Activated T-helper 2 cell treated with anti-CD3 and anti-CD28 coated beads, Interferon-gamma antibody, Interleukin-2, Interleukin-4, amounts not matched to agents 10 μg/mL and 5 μg/mL and 100 μg/mL, durations not matched to agents 14 hours and 24 hours and 36 hours (primary cell): ENCODE measurements at regions of chr18 and their contacts with region 1.

Region 1: GRCh38 chr18:77054606-77055428 is 77.8 kb downstream of the MBP start:
- DNase-seq: peak; percentile 80
- H3K4me3 Mint-ChIP-seq: peak overlapping the region; percentile 83
- H3K27ac Mint-ChIP-seq: peak overlapping the region; percentile 96
- H3K4me1 Mint-ChIP-seq: peaks cover 62% of the 10 kb centered on the region
- H3K27me3 Mint-ChIP-seq: no peaks in the 10 kb centered on the region

Region 2: GRCh38 chr18:76013057-76013456 is 1041.8 kb before region 1 on chr18:
- intact Hi-C with region 1: no loop called
- DNase-seq: no peak
- H3K4me3 Mint-ChIP-seq: no peak overlapping the region
- H3K27ac Mint-ChIP-seq: no peak overlapping the region
- H3K4me1 Mint-ChIP-seq: no peaks in the 10 kb centered on the region
- H3K27me3 Mint-ChIP-seq: no peaks in the 10 kb centered on the region

Region 3: GRCh38 chr18:77000527-77000926 is 54.3 kb before region 1 on chr18:
- intact Hi-C with region 1: loop called (anchors 1 kb)
- DNase-seq: no peak
- H3K4me3 Mint-ChIP-seq: no peak overlapping the region
- H3K27ac Mint-ChIP-seq: no peak overlapping the region
- H3K4me1 Mint-ChIP-seq: peaks cover 32% of the 10 kb centered on the region
- H3K27me3 Mint-ChIP-seq: peaks cover 3% of the 10 kb centered on the region

Region 4: DNA sequence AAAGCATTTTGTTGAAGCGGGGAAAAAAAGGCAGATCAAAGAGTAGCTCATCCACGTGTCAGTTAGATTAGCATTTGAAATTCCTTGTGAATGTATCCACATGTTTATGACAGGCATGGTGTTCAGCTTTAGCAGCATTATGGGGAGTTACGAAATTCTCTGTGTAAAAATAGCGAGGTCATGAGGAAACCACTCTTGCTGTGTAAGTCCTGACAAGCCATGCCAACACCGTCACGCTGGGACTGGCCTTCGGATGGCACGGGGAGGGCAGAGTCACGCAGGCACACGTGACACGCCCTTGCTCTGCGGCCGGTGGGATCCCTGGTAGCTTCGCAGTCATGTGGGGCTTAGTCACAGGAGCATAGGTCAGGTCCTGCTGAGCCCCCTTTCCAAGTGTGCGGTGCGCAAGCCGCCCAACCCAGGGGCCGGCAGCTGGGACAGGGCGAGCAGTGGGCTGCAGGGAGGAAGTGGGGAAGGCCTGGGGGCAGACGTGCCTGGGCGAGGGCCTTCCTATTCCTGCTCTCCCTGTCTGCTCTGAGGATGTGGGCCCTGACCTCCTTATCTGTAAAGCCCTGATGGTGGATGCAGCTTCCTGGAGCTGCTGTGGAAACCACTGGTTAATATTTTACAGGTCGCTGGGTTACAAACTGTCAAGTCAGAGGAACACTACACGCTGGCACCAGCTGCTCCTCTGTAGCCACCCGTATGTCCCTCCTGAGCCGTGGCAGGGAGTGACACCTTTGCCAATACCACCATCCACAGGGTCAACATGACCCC is 59.8 kb after region 1 on chr18:
- intact Hi-C with region 1: no loop called
- DNase-seq: no peak
- H3K4me3 Mint-ChIP-seq: no peak overlapping the region
- H3K27ac Mint-ChIP-seq: peak overlapping the region; percentile 55
- H3K4me1 Mint-ChIP-seq: peaks cover 66% of the 10 kb centered on the region
- H3K27me3 Mint-ChIP-seq: no peaks in the 10 kb centered on the region

Region 5: GRCh38 chr18:77658751-77659448 is 604.1 kb after region 1 on chr18:
- intact Hi-C with region 1: loop called (anchors 5 kb)
- DNase-seq: no peak
- H3K4me3 Mint-ChIP-seq: no peak overlapping the region
- H3K27ac Mint-ChIP-seq: no peak overlapping the region
- H3K4me1 Mint-ChIP-seq: no peaks in the 10 kb centered on the region
- H3K27me3 Mint-ChIP-seq: no peaks in the 10 kb centered on the region